ENCODE measurements at regions of chr1 and their contacts with region 1.

Region 1: DNA sequence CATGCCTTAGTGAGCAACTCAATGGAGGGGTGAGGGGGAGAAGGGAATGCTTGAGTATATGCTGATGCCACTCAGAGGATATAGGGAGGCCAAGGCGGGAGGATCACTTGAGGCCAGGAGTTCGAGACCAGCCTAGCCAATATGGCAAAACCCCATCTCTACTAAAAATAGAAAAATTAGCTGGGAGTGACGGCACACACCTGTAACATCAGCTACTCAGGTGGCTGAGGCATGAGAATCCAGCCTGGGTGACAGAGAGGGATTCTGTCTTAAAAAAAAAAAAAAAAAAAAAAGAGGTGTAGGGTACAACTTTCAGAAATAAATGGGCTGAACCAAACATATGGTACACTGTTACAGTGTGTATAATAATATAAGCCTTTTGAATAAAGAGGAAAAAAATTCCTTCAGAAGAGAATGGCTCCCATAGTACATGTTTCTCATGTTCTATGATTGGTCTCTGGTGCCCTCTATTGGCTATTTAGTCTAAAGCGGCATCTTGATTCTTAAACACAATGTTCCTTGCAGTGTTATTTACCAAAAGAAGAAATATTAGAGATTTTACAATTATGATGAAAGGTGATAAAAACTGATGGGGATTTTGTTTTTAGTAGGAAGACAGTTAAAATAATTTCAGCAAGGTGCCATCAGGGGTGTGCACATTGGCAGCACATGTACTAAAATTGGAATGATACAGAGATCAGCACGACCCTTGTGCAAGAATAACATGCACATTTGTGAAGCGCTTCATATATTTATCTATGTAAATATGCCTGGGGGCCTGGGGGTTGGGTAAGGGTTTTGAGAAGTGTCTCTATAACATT is 109.8 kb downstream of the PATJ start:
- DNase-seq: peak; percentile 79
- ATAC-seq: peak; percentile 87
- H3K4me3 ChIP-seq: no peak overlapping the region
- H3K27ac ChIP-seq: no peak overlapping the region
- H3K4me1 ChIP-seq: no peaks in the 10 kb centered on the region
- H3K27me3 ChIP-seq: peaks cover 2% of the 10 kb centered on the region; the same call in 1 of the 2 replicates
- CTCF ChIP-seq: peak; percentile 89
- POLR2A ChIP-seq: no peak
- RAD21 ChIP-seq: peak; percentile 90

Region 2: DNA sequence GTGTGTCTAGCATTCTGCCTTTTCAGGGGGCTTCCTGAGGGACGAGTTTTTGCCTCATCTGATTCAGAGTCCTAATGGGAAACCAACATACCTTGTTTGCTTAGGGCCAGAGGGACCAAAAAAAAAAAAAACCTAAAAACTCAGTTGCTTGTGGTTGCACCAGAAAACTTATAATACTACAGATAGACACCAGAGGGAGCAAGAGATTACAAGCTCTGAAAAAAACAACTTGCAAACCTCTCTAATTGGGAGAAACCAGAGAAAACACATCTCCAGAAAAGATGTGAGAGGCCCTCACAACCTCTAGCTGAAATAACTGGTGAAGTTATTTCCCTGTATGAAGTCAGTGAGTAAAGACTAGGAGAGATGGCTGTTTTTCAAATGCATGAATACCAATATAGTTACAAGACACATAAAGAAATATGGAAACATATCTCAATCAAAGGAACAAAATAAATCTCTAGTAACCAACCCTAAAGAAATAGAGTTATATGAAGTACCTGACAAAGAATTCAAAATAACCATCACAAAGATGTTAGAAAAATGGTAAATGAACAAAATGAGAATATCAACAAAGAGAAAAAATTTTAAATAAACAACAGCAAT is 1003.4 kb before region 1 on chr1:
- CTCF ChIA-PET with region 1: interaction called, 7 read pairs
- POLR2A ChIA-PET with region 1: no interaction called
- dilution Hi-C with region 1: no loop called
- in situ Hi-C with region 1: loop called (anchors 25 kb)
- intact Hi-C with region 1: loop called (anchors 1 kb)
- DNase-seq: peak; percentile 38
- ATAC-seq: no peak
- H3K4me3 ChIP-seq: no peak overlapping the region
- H3K27ac ChIP-seq: no peak overlapping the region
- H3K4me1 ChIP-seq: no peaks in the 10 kb centered on the region
- H3K27me3 ChIP-seq: no peaks in the 10 kb centered on the region
- CTCF ChIP-seq: peak; percentile 58
- POLR2A ChIP-seq: no peak
- RAD21 ChIP-seq: peak; percentile 50

Region 3: DNA sequence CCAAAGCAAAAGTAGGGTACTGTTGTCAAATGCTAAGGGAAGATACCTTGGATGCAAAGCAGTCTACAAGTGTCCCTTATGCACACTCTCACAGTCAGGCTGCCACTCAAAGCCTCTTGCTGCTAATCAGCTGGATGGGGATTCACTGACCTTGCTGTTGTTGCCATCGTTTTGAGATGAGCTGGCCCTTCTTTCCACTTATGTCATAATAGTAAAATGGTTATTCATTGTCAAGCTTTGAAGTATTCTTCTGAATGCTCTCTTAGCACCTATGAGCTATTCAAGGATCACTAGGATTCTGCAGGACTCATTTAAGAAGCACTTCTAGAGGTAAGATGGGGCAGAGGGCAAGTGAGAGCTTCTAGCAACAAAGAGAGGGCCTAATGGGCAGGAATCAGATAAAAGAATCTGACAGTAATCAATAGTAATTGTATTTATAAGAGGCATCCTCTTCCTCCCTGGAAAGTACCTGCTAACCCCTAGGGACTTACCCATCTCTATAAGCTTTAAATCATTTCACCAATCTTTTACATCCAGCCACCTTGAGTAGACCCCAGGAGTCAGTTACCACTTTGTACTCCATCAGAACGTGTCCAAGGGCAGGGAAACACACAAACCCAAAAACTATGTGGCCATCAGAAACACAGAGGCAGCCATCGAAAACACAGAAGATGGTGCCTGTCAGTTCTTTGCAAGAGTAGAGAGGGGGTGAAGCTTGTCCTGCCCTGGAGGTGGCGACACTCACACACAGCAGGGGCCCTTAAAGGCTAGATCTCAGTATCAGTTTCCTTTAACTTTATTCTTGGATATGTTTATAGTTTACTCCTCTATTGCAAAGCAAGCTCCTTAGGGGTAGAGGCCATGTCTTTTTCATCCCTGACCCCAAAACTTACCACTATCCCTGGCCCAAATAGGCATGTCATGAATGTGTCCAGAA is 873.4 kb before region 1 on chr1:
- CTCF ChIA-PET with region 1: no interaction called
- POLR2A ChIA-PET with region 1: no interaction called
- dilution Hi-C with region 1: no loop called
- in situ Hi-C with region 1: loop called (anchors 10 kb)
- intact Hi-C with region 1: loop called (anchors 2 kb)
- DNase-seq: peak; percentile 50
- ATAC-seq: peak; percentile 97
- H3K4me3 ChIP-seq: no peak overlapping the region
- H3K27ac ChIP-seq: no peak overlapping the region
- H3K4me1 ChIP-seq: no peaks in the 10 kb centered on the region
- H3K27me3 ChIP-seq: no peaks in the 10 kb centered on the region
- CTCF ChIP-seq: peak; percentile 72
- POLR2A ChIP-seq: no peak
- RAD21 ChIP-seq: peak; percentile 80

Region 4: GRCh38 chr1:61453111-61453961 is 398.7 kb before region 1 on chr1:
- CTCF ChIA-PET with region 1: interaction called, 3 read pairs
- POLR2A ChIA-PET with region 1: interaction called, 3 read pairs
- dilution Hi-C with region 1: no loop called
- in situ Hi-C with region 1: no loop called
- intact Hi-C with region 1: loop called (anchors 1 kb)
- DNase-seq: peak; percentile 86
- ATAC-seq: peak; percentile 98
- H3K4me3 ChIP-seq: no peak overlapping the region
- H3K27ac ChIP-seq: no peak overlapping the region
- H3K4me1 ChIP-seq: peaks cover 2% of the 10 kb centered on the region; the same call in 1 of the 2 replicates
- H3K27me3 ChIP-seq: no peaks in the 10 kb centered on the region; the same call in 1 of the 2 replicates
- CTCF ChIP-seq: peak; percentile 90
- POLR2A ChIP-seq: no peak
- RAD21 ChIP-seq: peak; percentile 80

Region 5: DNA sequence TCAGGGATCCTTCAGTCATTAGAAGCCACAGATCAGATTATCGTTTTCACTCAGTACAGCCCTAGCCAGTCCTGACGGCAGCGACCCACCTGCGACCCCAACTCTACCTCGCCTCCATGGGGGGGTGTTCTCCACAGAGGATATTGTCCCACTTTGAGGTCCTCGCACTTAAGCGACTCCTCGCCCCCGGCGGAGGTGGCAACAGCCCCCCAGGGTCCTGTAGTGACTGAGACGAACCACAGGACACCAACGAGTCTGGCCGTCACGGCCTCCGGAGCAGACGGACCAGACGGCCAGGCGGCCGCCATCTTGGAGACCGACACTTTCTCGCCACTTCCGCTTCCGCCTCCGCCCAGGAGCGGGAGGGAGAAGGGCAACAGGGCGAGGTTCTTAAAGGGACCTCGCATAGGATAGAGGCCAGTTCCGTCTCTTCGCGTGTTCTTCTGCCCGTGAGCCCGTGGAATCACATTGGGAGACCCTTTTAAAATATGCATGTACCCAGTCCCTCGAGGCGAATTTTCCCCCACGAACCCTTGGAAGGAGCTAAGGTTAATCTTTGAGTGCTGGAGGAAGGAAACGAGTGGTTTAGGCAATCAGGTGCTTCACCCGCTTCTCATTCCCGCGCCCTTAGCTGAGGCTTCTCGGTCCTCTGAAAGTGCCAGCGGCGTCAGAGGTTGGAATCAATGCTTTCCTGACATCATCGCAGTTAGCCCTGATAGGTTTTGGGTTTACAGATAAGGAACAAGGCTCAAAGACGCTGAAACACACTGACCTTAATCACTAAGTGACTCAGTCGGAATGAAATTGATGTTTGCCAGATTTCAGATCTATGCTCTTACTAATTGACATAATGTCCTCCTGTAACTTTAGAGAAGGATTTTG is 127.0 kb before region 1 on chr1 and contains the start of gene TM2D1:
- CTCF ChIA-PET with region 1: interaction called, 8 read pairs
- POLR2A ChIA-PET with region 1: no interaction called
- dilution Hi-C with region 1: no loop called
- in situ Hi-C with region 1: no loop called
- intact Hi-C with region 1: loop called (anchors 5 kb)
- DNase-seq: peak; percentile 84
- ATAC-seq: peak; percentile 99
- H3K4me3 ChIP-seq: peak within 1 kb of the TSS; percentile 73
- H3K27ac ChIP-seq: peak within 1 kb of the TSS; percentile 90
- H3K4me1 ChIP-seq: peaks cover 3% of the 10 kb centered on the region; the same call in 1 of the 2 replicates
- H3K27me3 ChIP-seq: no peaks in the 10 kb centered on the region
- CTCF ChIP-seq: no peak
- POLR2A ChIP-seq: peak; percentile 99
- RAD21 ChIP-seq: no peak
- total RNA-seq, gene TM2D1: 14.3 and 21.4 TPM in 2 replicates

Region 6: GRCh38 chr1:61825393-61825792 is 26.7 kb before region 1 on chr1:
- CTCF ChIA-PET with region 1: no interaction called
- POLR2A ChIA-PET with region 1: no interaction called
- dilution Hi-C with region 1: no loop called
- in situ Hi-C with region 1: no loop called
- intact Hi-C with region 1: no loop called
- DNase-seq: no peak
- ATAC-seq: no peak
- H3K4me3 ChIP-seq: no peak overlapping the region
- H3K27ac ChIP-seq: no peak overlapping the region
- H3K4me1 ChIP-seq: no peaks in the 10 kb centered on the region
- H3K27me3 ChIP-seq: no peaks in the 10 kb centered on the region
- CTCF ChIP-seq: no peak
- POLR2A ChIP-seq: no peak
- RAD21 ChIP-seq: no peak

Region 7: GRCh38 chr1:61865646-61866231 is 13.7 kb after region 1 on chr1:
- CTCF ChIA-PET with region 1: interaction called, 10 read pairs
- POLR2A ChIA-PET with region 1: no interaction called
- dilution Hi-C with region 1: no loop called
- in situ Hi-C with region 1: no loop called
- intact Hi-C with region 1: no loop called
- DNase-seq: no peak
- ATAC-seq: no peak
- H3K4me3 ChIP-seq: no peak overlapping the region
- H3K27ac ChIP-seq: no peak overlapping the region
- H3K4me1 ChIP-seq: no peaks in the 10 kb centered on the region
- H3K27me3 ChIP-seq: no peaks in the 10 kb centered on the region
- CTCF ChIP-seq: no peak
- POLR2A ChIP-seq: no peak
- RAD21 ChIP-seq: no peak

Measured in IMR-90 (cell line).